ENCODE measurements at regions of chr4 and their contacts with region 1.

Region 1: GRCh38 chr4:24794916-24795665 is at the start of gene SOD3:
- DNase-seq: peak in 1 of 2 donors; percentile 94
- H3K4me3 ChIP-seq: peak within 1 kb of the TSS; percentile 29 to 39
- H3K27ac ChIP-seq: peak within 1 kb of the TSS; percentile 79
- H3K4me1 ChIP-seq: peaks cover 37% of the 10 kb centered on the region
- H3K27me3 ChIP-seq: no peaks in the 10 kb centered on the region
- CTCF ChIP-seq: no peak
- POLR2A ChIP-seq: peak in 1 of 2 donors; percentile 78
- total RNA-seq, gene SOD3: 280 TPM

Region 2: GRCh38 chr4:24472514-24473308 is 322.4 kb before region 1 on chr4:
- intact Hi-C with region 1: loop called (anchors 10 kb)
- DNase-seq: no peak
- H3K4me3 ChIP-seq: peak overlapping the region; percentile 48 to 67
- H3K27ac ChIP-seq: peak overlapping the region; percentile 78
- H3K4me1 ChIP-seq: peaks cover 19% of the 10 kb centered on the region
- H3K27me3 ChIP-seq: no peaks in the 10 kb centered on the region
- CTCF ChIP-seq: peak in 1 of 3 experiments; percentile 55
- POLR2A ChIP-seq: peak in 1 of 2 donors; percentile 13

Region 3: GRCh38 chr4:24856586-24856985 is 61.5 kb after region 1 on chr4:
- intact Hi-C with region 1: loop called (anchors 10 kb)
- DNase-seq: no peak
- H3K4me3 ChIP-seq: no peak overlapping the region
- H3K27ac ChIP-seq: peak overlapping the region; percentile 74
- H3K4me1 ChIP-seq: peaks cover 29% of the 10 kb centered on the region
- H3K27me3 ChIP-seq: no peaks in the 10 kb centered on the region
- CTCF ChIP-seq: no peak
- POLR2A ChIP-seq: no peak

Measured in vagina (tissue), 2 donors.